Activated T-helper 2 cell treated with anti-CD3 and anti-CD28 coated beads, Interferon-gamma antibody, Interleukin-2, Interleukin-4, amounts not matched to agents 10 μg/mL and 5 μg/mL and 100 μg/mL, durations not matched to agents 14 hours and 24 hours and 36 hours (primary cell): ENCODE measurements at regions of chrX and their contacts with region 1.

Region 1: GRCh38 chrX:10119399-10119990 is 37.3 kb upstream of the CLCN4 start:
- DNase-seq: peak; percentile 48
- H3K4me3 Mint-ChIP-seq: no peak overlapping the region
- H3K27ac Mint-ChIP-seq: peak overlapping the region; percentile 6
- H3K4me1 Mint-ChIP-seq: peaks cover 13% of the 10 kb centered on the region
- H3K27me3 Mint-ChIP-seq: no peaks in the 10 kb centered on the region

Region 2: DNA sequence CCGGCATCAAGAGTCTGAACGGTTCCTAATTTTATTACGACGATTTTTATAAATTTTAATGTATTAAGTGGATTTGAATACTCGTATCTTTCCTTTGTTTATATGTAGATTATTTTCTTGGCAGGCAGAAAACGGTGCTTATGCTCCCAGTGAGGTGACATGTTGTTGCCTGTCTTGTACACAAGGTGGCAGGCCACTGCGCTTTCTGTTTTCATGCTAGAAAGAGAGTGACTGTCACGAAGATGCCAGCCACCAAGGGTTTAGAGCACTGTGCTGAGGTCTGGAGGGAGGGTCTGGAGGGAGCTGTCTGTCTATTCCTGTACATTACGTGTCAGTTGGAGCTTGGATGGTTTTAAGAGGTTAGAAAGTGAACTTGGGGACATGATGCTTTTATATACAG is 245.5 kb before region 1 on chrX:
- intact Hi-C with region 1: loop called (anchors 1 kb)
- DNase-seq: peak; percentile 9
- H3K4me3 Mint-ChIP-seq: no peak overlapping the region
- H3K27ac Mint-ChIP-seq: no peak overlapping the region
- H3K4me1 Mint-ChIP-seq: peaks cover 7% of the 10 kb centered on the region
- H3K27me3 Mint-ChIP-seq: peaks cover 19% of the 10 kb centered on the region

Region 3: DNA sequence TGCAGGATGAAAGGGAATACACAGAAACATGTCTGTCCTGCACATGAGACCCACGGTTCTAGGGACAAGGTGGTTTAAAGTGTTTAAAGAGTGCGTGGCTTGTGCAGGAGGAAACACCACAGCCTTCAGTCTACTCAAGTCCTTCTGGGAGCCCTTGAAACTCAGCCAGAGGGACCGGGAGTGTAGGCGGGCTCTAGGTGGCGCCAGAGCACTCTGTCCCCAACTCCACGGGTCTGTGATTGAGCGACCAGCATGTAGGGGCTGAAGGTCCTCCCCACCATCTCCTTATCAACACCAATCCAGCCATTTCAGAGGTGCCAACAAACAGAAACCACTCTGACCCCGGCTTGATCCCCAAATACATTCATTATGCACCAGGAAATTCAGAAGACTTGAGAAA is 234.3 kb before region 1 on chrX:
- intact Hi-C with region 1: loop called (anchors 2 kb)
- DNase-seq: peak; percentile 22
- H3K4me3 Mint-ChIP-seq: no peak overlapping the region
- H3K27ac Mint-ChIP-seq: no peak overlapping the region
- H3K4me1 Mint-ChIP-seq: no peaks in the 10 kb centered on the region
- H3K27me3 Mint-ChIP-seq: peaks cover 17% of the 10 kb centered on the region

Region 4: DNA sequence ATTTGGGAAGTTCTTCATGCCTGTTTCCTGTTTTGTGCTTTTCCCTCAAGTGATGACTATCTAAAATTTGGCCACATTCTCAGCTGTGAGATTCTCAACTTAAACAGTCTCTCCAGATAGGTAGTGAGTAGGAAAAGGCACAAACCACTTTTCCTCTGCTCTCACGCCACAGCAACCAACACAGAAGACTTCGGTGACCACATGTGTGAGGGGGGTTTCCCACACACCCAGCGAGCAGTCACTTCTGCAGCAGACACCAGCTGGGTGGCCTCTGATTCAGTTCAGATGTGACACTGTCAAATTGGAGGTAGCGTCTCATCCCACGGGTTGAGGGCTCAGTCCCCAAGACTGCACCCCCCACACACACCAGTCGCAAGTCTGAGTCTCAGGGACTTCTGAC is 177.4 kb before region 1 on chrX:
- intact Hi-C with region 1: loop called (anchors 5 kb)
- DNase-seq: peak; percentile 44
- H3K4me3 Mint-ChIP-seq: no peak overlapping the region
- H3K27ac Mint-ChIP-seq: peak overlapping the region; percentile 4
- H3K4me1 Mint-ChIP-seq: peaks cover 22% of the 10 kb centered on the region
- H3K27me3 Mint-ChIP-seq: peaks cover 24% of the 10 kb centered on the region

Region 5: DNA sequence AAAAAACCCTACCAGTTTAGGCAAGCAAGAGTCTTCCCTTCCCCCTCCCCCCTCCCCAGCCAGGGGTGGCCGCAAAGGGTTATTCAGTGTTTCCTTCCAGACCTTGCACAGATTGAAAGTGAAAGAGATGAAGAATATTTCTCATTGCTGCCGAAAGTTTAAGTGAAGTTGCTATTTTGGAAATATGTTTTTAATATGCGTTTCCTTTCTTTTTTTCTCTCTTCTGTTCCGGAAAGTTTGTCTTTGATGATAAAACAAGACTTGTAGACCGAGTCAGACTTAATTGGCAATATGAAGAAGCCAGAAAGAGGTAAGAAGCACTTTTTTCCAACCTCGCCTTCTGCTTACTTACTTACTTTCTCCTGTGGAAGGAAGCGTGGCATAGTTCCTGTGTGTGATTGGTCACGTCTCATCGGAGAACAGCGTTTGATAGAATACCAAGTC is 21.2 kb before region 1 on chrX:
- intact Hi-C with region 1: loop called (anchors 2 kb)
- DNase-seq: peak; percentile 60
- H3K4me3 Mint-ChIP-seq: peak overlapping the region; percentile 76
- H3K27ac Mint-ChIP-seq: peak overlapping the region; percentile 91
- H3K4me1 Mint-ChIP-seq: peaks cover 31% of the 10 kb centered on the region
- H3K27me3 Mint-ChIP-seq: no peaks in the 10 kb centered on the region